Breast epithelium (tissue), 4 donors: ENCODE measurements at regions of chr6 and their contacts with region 1.

Region 1: GRCh38 chr6:130720076-130720715 is 107.0 kb upstream of the SMLR1 start:
- DNase-seq: no peak
- H3K4me3 ChIP-seq: no peak overlapping the region
- H3K27ac ChIP-seq: no peak overlapping the region
- H3K4me1 ChIP-seq: no peaks in the 10 kb centered on the region
- H3K27me3 ChIP-seq: no peaks in the 10 kb centered on the region
- CTCF ChIP-seq: no peak
- POLR2A ChIP-seq: no peak

Region 2: GRCh38 chr6:130760006-130760405 is 39.8 kb after region 1 on chr6:
- intact Hi-C with region 1: no loop called
- DNase-seq: no peak
- H3K4me3 ChIP-seq: no peak overlapping the region
- H3K27ac ChIP-seq: no peak overlapping the region
- H3K4me1 ChIP-seq: no peaks in the 10 kb centered on the region
- H3K27me3 ChIP-seq: no peaks in the 10 kb centered on the region
- CTCF ChIP-seq: peak in 1 of 3 donors; percentile 38
- POLR2A ChIP-seq: no peak

Region 3: GRCh38 chr6:131894735-131895424 is 1174.7 kb after region 1 on chr6:
- intact Hi-C with region 1: loop called (anchors 5 kb)
- DNase-seq: no peak
- H3K4me3 ChIP-seq: no peak overlapping the region
- H3K27ac ChIP-seq: no peak overlapping the region
- H3K4me1 ChIP-seq: no peaks in the 10 kb centered on the region
- H3K27me3 ChIP-seq: no peaks in the 10 kb centered on the region
- CTCF ChIP-seq: no peak
- POLR2A ChIP-seq: no peak